ENCODE measurements at regions of chr2 and their contacts with region 1.

Region 1: GRCh38 chr2:204545023-204545860 is at the start of gene PARD3B:
- DNase-seq: peak; percentile 74
- ATAC-seq: peak; percentile 84
- H3K4me3 ChIP-seq: peak within 1 kb of the TSS; percentile 80
- H3K27ac ChIP-seq: peak within 1 kb of the TSS; percentile 49
- H3K4me1 ChIP-seq: peaks cover 20% of the 10 kb centered on the region
- H3K27me3 ChIP-seq: no peaks in the 10 kb centered on the region
- CTCF ChIP-seq: no peak
- total RNA-seq, gene PARD3B: 3.9 and 10.9 TPM in 2 replicates

Region 2: GRCh38 chr2:204343685-204344084 is 201.6 kb before region 1 on chr2:
- CTCF ChIA-PET with region 1: no interaction called
- POLR2A ChIA-PET with region 1: no interaction called
- intact Hi-C with region 1: no loop called
- DNase-seq: no peak
- ATAC-seq: no peak
- H3K4me3 ChIP-seq: no peak overlapping the region
- H3K27ac ChIP-seq: no peak overlapping the region
- H3K4me1 ChIP-seq: peaks cover 12% of the 10 kb centered on the region
- H3K27me3 ChIP-seq: no peaks in the 10 kb centered on the region
- CTCF ChIP-seq: no peak

Region 3: GRCh38 chr2:204611017-204611631 is 65.9 kb after region 1 on chr2:
- CTCF ChIA-PET with region 1: no interaction called
- POLR2A ChIA-PET with region 1: no interaction called
- intact Hi-C with region 1: loop called (anchors 5 kb)
- DNase-seq: no peak
- ATAC-seq: no peak
- H3K4me3 ChIP-seq: no peak overlapping the region
- H3K27ac ChIP-seq: no peak overlapping the region
- H3K4me1 ChIP-seq: no peaks in the 10 kb centered on the region
- H3K27me3 ChIP-seq: no peaks in the 10 kb centered on the region
- CTCF ChIP-seq: no peak